ENCODE measurements at regions of chr11 and their contacts with region 1.

Region 1: DNA sequence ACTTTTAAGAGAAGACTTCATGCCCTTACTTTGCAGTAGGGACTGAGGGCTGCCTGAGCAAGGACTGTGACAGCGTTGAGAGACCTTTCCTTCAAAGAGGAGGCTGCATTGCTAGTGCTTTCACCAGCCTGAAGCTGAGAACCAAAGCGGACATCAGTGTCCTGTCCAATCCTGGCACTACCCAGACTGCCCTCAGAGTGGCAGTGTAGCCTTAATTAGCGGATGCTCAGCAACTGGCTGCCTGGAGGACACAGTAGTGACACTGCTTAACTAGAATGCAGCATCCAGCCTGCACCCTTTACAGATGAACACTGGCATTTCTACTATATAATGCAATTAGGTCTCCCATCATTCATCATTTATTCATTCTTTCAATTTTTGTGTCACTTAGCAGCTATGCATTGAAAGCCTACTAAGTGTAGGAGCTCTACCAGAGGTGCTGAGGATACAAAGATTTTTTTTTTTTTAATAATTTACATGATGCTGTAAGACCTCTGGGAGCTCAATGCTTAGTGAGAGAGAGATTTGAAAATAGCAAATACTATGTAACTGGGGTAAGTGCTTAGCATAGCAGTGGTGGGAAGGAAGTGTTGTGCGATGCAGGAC is 36.9 kb upstream of the SLC36A4 start:
- DNase-seq: peak; percentile 54 to 90 (median 80)

Region 2: GRCh38 chr11:93303689-93304088 is 69.0 kb after region 1 on chr11:
- intact Hi-C with region 1: no loop called
- DNase-seq: no peak

Region 3: GRCh38 chr11:93543292-93543977 is 308.7 kb after region 1 on chr11 and contains the start of gene SMCO4:
- intact Hi-C with region 1: loop called (anchors 5 kb)
- DNase-seq: peak; percentile 36 to 91 (median 82)

Region 4: GRCh38 chr11:93652161-93652597 is 417.5 kb after region 1 on chr11:
- intact Hi-C with region 1: loop called (anchors 5 kb)
- DNase-seq: peak in 19 of 42 donors; percentile 17 to 79 (median 44)